ENCODE measurements at regions of chr3 and their contacts with region 1.

Region 1: DNA sequence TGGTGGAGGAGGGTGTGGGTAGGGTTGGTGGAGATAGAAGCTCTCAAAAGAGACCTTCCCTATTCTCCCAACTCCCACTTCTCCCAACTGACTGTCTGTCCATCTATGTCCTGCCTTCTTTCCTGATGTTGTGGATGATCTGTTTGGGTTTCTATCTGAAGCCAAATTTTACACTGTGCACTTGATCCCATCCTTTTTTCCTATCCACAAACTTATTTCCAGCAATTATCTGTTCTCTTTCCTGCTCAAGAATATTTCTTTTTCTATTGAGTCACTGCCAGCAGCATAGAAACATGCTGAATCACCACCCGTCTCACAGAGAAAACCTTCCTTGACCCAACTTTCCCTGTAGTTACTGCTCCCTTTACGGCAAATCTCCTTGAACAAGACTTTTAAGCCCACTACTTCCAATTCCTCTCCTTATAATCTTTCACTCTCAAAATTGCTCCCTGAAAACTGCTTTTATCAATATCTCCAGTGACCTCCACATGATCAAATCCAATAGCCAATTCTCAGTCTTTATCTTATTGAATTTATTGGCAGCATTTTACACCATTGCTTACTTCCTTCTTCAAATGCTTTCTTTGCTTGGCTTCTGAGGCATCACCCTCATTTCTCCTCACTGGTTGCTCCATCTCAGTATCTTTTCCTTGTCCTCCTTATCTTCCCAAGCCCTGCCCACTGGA is 141.2 kb upstream of the SLC7A14 start:
- DNase-seq: peak; percentile 51 to 81 (median 60)
- ATAC-seq: peak; percentile 65
- H3K4me3 ChIP-seq: no peak overlapping the region
- H3K27ac ChIP-seq: peak overlapping the region; percentile 83
- H3K4me1 ChIP-seq: peaks cover 42 to 79% of the 10 kb centered on the region in 2 experiments
- H3K27me3 ChIP-seq: no peaks in the 10 kb centered on the region
- CTCF ChIP-seq: no peak
- EP300 ChIP-seq: peak; percentile 79
- POLR2A ChIP-seq: 0 out of 2 replicates have a peak, but pooled peaks have one; percentile 28
- RAD21 ChIP-seq: no peak

Region 2: DNA sequence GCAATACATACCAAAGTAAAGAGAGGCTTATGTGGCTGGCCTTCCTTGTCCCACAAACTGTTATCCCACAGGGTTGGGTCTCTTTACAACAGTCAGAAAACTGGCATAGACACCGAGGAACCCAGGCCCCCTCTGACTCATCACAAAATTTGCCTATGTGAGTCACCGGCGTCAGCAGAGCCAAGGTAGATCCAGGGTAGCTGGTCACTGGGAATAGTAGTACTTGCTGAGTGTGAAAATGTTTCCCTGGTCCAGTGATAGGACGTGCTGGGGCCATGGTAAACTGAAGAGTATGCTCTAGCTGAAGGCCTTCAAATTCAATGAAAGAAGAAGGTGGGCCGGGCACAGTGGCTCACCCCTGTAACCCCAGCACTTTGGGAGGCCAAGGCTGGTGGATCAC is 396.8 kb before region 1 on chr3:
- CTCF ChIA-PET with region 1: no interaction called
- POLR2A ChIA-PET with region 1: no interaction called
- in situ Hi-C with region 1: no loop called
- intact Hi-C with region 1: no loop called
- DNase-seq: peak; percentile 28 to 67 (median 41)
- ATAC-seq: peak; percentile 81
- H3K4me3 ChIP-seq: no peak overlapping the region
- H3K27ac ChIP-seq: peak overlapping the region; percentile 36; the same call in 1 of the 3 replicates
- H3K4me1 ChIP-seq: peaks cover 10% of the 10 kb centered on the region in 2 experiments; a peak in 3 of 5 replicates
- H3K27me3 ChIP-seq: no peaks in the 10 kb centered on the region
- CTCF ChIP-seq: no peak
- EP300 ChIP-seq: no peak
- POLR2A ChIP-seq: no peak
- RAD21 ChIP-seq: no peak

Region 3: DNA sequence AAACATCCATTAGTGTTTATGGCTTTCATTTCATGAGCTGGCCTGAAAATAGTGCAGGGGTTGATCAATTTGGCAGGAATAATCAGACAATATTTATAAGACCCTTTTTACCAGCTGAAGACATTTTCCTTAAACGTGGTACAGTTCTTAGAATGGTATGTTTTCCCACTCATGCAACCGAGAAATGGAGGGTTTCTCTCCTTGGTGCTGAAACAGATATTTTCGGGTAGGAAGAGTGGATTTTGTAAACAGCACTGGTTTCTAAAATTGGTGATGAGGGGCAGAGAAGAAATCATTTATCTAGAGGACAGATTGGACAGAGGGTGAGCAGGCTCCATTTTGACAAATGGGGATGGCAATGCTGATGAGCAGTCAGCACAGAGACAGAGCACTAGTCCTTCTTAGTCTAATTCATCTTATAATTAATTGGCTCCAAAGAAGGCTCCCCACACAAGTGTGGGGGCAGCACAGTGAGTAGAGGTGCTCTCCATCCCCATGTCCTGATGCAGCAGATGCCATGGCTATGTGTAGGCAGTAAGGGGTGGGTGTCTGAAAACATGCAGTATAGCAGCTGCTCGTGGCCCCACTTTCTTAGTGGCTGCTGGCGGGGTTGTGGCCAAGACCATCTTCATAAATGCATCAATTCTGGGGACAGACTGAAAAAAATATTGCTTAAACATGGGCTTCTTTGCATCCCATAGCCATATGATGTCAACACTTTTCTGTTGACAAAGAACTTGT is 123.2 kb before region 1 on chr3:
- CTCF ChIA-PET with region 1: no interaction called
- POLR2A ChIA-PET with region 1: no interaction called
- in situ Hi-C with region 1: no loop called
- intact Hi-C with region 1: no loop called
- DNase-seq: no peak
- ATAC-seq: no peak
- H3K4me3 ChIP-seq: no peak overlapping the region
- H3K27ac ChIP-seq: no peak overlapping the region
- H3K4me1 ChIP-seq: no peaks in the 10 kb centered on the region
- H3K27me3 ChIP-seq: no peaks in the 10 kb centered on the region
- CTCF ChIP-seq: no peak
- EP300 ChIP-seq: no peak
- POLR2A ChIP-seq: no peak
- RAD21 ChIP-seq: no peak

Region 4: DNA sequence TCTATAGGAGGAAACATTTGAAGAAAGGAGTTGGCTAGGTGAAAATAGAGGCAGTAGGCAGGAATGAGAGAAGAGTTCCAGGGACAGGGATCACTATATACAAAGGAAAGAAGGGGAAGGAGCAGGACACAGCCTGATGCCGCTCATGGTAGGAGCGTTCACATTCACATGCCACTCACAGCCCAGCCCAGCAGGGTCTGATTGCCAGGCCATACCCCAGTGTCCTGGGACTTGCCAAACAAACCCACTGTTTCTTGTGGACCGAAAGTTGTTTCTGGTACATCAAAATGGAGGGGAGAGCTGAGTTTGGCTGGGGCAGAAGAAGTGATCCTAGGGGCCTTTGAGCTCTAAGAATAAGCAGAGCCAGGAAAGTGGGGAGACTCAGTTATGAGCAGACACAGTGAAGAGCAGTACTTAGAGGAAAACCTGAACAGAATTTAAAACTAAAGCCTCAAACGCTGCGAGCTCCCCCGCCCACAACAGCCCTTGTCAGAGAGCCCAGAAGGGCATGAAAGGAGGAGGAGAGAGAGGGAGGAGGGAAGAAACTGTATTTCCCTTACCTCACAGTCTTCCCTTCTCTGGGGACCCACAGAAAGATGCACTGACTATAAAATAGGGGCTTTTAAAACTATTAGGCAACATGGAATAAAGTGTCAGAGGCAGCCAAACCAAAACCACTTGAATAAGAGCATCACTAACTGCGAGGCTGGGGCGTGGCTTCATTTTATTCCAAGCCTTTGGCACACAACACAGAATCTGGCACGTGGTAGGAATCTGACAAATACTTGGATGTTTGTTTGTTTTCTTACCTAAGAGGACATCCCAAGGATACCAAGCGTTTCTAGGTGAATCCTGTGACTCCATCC is 13.8 kb after region 1 on chr3:
- CTCF ChIA-PET with region 1: interaction called, 3 read pairs
- POLR2A ChIA-PET with region 1: interaction called, 18 read pairs
- in situ Hi-C with region 1: no loop called
- intact Hi-C with region 1: no loop called
- DNase-seq: no peak
- ATAC-seq: peak; percentile 53
- H3K4me3 ChIP-seq: no peak overlapping the region
- H3K27ac ChIP-seq: no peak overlapping the region; the same call in 2 of the 3 replicates
- H3K4me1 ChIP-seq: peaks cover 0 to 17% of the 10 kb centered on the region in 2 experiments; a peak in 3 of 5 replicates
- H3K27me3 ChIP-seq: no peaks in the 10 kb centered on the region
- CTCF ChIP-seq: no peak
- EP300 ChIP-seq: no peak
- POLR2A ChIP-seq: no peak
- RAD21 ChIP-seq: no peak

Region 5: GRCh38 chr3:170778240-170779217 is 51.4 kb after region 1 on chr3:
- CTCF ChIA-PET with region 1: no interaction called
- POLR2A ChIA-PET with region 1: interaction called, 5 read pairs
- in situ Hi-C with region 1: no loop called
- intact Hi-C with region 1: loop called (anchors 1 kb)
- DNase-seq: peak; percentile 30 to 93 (median 58)
- ATAC-seq: peak; percentile 86
- H3K4me3 ChIP-seq: no peak overlapping the region
- H3K27ac ChIP-seq: peak overlapping the region; percentile 70
- H3K4me1 ChIP-seq: peaks cover 12 to 61% of the 10 kb centered on the region in 2 experiments
- H3K27me3 ChIP-seq: no peaks in the 10 kb centered on the region
- CTCF ChIP-seq: no peak
- EP300 ChIP-seq: peak; percentile 99
- POLR2A ChIP-seq: no peak
- RAD21 ChIP-seq: peak in 1 of 2 experiments; percentile 40; a peak in 3 of 4 replicates

Region 6: DNA sequence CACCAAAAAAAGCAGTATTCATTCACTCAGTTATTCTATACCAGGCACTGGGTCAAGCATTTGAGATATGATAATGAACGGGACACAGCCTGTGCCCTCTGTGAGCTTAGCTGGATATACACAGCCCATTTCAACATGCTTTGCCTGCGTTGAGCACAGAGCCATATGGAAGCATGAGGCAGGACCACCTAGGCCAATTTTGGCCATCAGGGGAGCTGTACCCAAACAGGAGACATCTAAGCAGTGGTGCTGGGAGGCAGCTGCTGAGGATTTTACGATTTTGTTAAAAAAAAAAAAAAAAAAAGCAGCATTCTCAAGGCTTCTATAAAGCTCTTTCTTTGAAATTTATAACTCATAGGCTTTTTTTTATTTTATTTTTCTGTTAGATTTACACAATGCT is 386.6 kb after region 1 on chr3:
- CTCF ChIA-PET with region 1: no interaction called
- POLR2A ChIA-PET with region 1: no interaction called
- in situ Hi-C with region 1: no loop called
- intact Hi-C with region 1: no loop called
- DNase-seq: peak in 2 of 4 experiments; percentile 12 to 17
- ATAC-seq: peak; percentile 87
- H3K4me3 ChIP-seq: no peak overlapping the region
- H3K27ac ChIP-seq: no peak overlapping the region
- H3K4me1 ChIP-seq: no peaks in the 10 kb centered on the region
- H3K27me3 ChIP-seq: no peaks in the 10 kb centered on the region
- CTCF ChIP-seq: peak; percentile 31 to 40 (median 31); a peak in 5 of 6 replicates
- EP300 ChIP-seq: no peak
- POLR2A ChIP-seq: no peak
- RAD21 ChIP-seq: no peak; a peak in 1 of 4 replicates